ENCODE measurements at regions of chr1 and their contacts with region 1.

Region 1: DNA sequence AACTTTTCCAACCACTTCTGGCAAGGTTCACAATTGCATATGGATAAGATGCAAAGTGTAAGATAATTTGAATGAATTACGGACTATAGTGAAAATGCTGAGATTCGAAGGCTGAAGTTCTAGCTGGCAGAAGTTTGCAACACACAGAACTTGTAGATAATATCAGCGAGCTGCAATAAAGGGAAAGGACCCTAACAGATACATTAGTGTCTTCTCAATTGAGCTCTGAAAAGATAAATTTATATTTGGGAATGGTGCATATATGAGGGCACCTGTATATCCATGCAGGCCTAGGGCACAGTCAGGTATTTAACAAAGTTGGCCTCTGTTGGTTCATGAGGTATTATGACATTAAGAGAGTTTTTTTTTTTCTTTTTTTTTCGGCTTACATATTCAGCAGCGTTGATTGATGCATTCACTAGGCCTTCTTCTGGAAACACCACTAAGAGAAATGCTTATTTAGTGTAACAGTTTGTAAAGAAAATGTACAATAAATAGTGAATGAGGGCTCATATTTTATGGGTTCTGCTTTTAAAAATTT is 2.2 kb downstream of the NFIA start:
- DNase-seq: no peak
- H3K4me3 ChIP-seq: peak overlapping the region; percentile 89 to 91
- H3K27ac ChIP-seq: peak overlapping the region; percentile 89 to 97
- H3K4me1 ChIP-seq: peaks cover 1% of the 10 kb centered on the region
- H3K27me3 ChIP-seq: no peaks in the 10 kb centered on the region
- CTCF ChIP-seq: no peak
- POLR2A ChIP-seq: no peak

Region 2: DNA sequence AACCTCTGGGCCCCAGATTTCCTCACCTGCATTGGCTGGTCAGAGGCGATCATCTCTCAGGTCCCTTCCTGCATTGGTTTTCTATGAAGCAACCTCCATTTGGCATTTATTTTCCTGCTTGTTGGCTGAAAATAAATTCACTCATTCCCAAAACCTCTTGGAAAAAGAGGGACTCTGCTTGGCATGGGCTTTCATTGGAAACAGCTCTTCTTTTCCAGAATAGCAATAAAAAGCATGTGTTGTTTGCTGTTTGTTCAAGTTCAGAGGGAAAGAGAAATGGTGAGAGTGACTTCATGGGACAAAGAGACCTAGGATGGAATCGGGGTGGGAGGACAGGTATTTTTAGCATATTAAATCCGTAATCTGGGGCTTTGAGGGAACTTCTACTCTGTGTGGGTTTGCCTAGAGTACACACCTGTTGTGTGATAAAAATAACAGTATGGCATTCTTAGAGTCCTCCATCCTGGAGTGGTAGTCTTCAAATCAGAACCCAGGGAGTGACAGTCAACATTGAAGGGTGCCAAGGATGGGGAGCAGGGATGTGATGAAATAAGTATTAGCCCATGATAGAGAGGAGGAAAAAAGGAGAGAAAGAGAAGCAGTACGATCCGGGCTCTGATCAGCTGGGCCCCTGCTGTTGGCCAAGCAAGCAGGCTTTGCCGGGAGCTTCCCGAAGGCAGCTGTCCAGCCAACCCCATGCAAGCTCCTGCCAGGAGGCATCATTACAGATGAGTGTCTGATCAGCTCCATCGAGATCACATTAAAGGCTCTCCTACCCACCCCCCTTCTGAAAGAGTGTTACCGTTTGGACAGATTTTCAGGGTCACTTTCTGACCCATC is 134.1 kb before region 1 on chr1:
- intact Hi-C with region 1: no loop called
- DNase-seq: no peak
- H3K4me3 ChIP-seq: no peak overlapping the region
- H3K27ac ChIP-seq: no peak overlapping the region
- H3K4me1 ChIP-seq: no peaks in the 10 kb centered on the region
- H3K27me3 ChIP-seq: no peaks in the 10 kb centered on the region
- CTCF ChIP-seq: no peak
- POLR2A ChIP-seq: no peak

Region 3: GRCh38 chr1:61124696-61125095 is 40.1 kb after region 1 on chr1:
- intact Hi-C with region 1: loop called (anchors 5 kb)
- DNase-seq: no peak
- H3K4me3 ChIP-seq: no peak overlapping the region
- H3K27ac ChIP-seq: peak overlapping the region; percentile 62 to 75
- H3K4me1 ChIP-seq: peaks cover 41% of the 10 kb centered on the region
- H3K27me3 ChIP-seq: no peaks in the 10 kb centered on the region
- CTCF ChIP-seq: no peak
- POLR2A ChIP-seq: no peak

Region 4: DNA sequence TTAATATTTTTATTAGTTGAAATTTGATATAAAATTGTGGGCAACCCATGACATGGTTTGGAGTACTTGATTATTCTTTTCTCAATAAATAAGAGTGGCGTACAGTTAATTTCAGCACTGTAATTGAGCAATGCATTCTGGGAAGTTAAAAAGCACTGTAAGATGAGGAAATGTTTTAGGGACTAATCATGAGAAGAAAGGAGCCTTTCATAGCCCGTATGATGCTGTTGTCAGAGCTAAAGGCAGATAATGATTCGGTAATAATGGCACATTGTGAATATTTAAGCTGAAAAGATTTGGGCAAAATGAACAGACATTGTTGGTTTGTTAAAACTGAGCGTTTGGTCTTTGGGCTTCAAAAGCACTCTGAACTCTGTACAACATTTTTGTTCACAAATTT is 137.1 kb after region 1 on chr1:
- intact Hi-C with region 1: no loop called
- DNase-seq: no peak
- H3K4me3 ChIP-seq: no peak overlapping the region
- H3K27ac ChIP-seq: no peak overlapping the region
- H3K4me1 ChIP-seq: no peaks in the 10 kb centered on the region
- H3K27me3 ChIP-seq: no peaks in the 10 kb centered on the region
- CTCF ChIP-seq: no peak
- POLR2A ChIP-seq: no peak